ENCODE measurements at regions of chr5 and their contacts with region 1.

Region 1: GRCh38 chr5:137743031-137743640 is 7.2 kb upstream of the KLHL3 start:
- DNase-seq: no peak
- ATAC-seq: peak; percentile 84
- H3K4me3 ChIP-seq: no peak overlapping the region
- H3K27ac ChIP-seq: no peak overlapping the region
- H3K4me1 ChIP-seq: no peaks in the 10 kb centered on the region; the same call in 1 of the 2 replicates
- H3K27me3 ChIP-seq: no peaks in the 10 kb centered on the region
- CTCF ChIP-seq: peak; percentile 59 to 79 (median 69)
- EP300 ChIP-seq: no peak
- POLR2A ChIP-seq: no peak
- RAD21 ChIP-seq: peak; percentile 82

Region 2: GRCh38 chr5:137665678-137666460 is 77.3 kb before region 1 on chr5:
- CTCF ChIA-PET with region 1: interaction called, 619 read pairs
- POLR2A ChIA-PET with region 1: interaction called, 33 read pairs
- RAD21 ChIA-PET with region 1: interaction called, 168 read pairs
- SMC1A ChIA-PET with region 1: interaction called, 155 read pairs
- in situ Hi-C with region 1: no loop called
- intact Hi-C with region 1: no loop called
- DNase-seq: peak; percentile 58
- ATAC-seq: peak; percentile 100
- H3K4me3 ChIP-seq: no peak overlapping the region
- H3K27ac ChIP-seq: peak overlapping the region; percentile 29
- H3K4me1 ChIP-seq: peaks cover 14% of the 10 kb centered on the region
- H3K27me3 ChIP-seq: no peaks in the 10 kb centered on the region
- CTCF ChIP-seq: no peak
- EP300 ChIP-seq: no peak
- POLR2A ChIP-seq: no peak
- RAD21 ChIP-seq: no peak

Region 3: DNA sequence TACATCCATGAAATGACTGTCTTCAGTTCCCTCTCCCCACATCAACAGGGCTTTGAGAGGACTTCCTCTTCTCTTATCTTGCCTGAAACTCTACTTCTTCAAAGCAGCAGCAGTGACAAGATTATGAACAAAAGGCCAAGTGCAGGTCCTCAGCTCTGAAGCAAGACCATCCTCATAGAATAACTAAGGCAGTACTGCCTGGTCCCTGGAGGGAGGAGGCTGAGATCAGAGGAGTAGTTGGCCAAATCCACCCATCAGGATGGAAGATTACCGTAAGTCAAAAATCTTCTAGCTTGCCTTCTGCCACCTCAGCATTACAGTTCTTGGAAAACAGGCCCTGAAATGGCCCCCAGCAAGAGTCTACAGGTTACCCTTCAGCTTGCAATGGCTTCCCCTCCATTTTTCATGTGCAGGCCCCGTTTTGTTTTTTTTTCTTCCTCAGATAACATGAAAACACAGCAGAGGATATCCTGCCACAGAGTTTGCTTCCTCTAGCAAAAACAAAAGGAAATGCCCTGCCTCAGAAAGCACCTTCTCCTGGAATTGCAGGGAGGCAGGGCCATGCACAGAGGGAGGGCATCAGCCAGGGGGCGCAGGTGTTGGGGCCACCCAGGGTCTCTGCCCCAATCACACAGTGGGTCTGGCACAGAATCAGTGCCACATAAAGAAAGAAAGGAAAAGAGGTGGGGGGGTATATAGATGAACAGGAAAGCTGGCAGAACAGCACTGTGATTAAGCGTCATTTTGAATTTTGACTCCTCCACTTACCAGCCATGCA is 47.3 kb before region 1 on chr5:
- CTCF ChIA-PET with region 1: interaction called, 32 read pairs
- POLR2A ChIA-PET with region 1: interaction called, 3 read pairs
- RAD21 ChIA-PET with region 1: no interaction called
- SMC1A ChIA-PET with region 1: interaction called, 4 read pairs
- in situ Hi-C with region 1: no loop called
- intact Hi-C with region 1: no loop called
- DNase-seq: no peak
- ATAC-seq: no peak
- H3K4me3 ChIP-seq: no peak overlapping the region
- H3K27ac ChIP-seq: peak overlapping the region; percentile 21; the same call in 1 of the 2 replicates
- H3K4me1 ChIP-seq: peaks cover 7% of the 10 kb centered on the region
- H3K27me3 ChIP-seq: no peaks in the 10 kb centered on the region
- CTCF ChIP-seq: peak in 2 of 3 experiments; percentile 12 to 15; a peak in 1 of 6 replicates
- EP300 ChIP-seq: no peak
- POLR2A ChIP-seq: no peak
- RAD21 ChIP-seq: no peak

Region 4: DNA sequence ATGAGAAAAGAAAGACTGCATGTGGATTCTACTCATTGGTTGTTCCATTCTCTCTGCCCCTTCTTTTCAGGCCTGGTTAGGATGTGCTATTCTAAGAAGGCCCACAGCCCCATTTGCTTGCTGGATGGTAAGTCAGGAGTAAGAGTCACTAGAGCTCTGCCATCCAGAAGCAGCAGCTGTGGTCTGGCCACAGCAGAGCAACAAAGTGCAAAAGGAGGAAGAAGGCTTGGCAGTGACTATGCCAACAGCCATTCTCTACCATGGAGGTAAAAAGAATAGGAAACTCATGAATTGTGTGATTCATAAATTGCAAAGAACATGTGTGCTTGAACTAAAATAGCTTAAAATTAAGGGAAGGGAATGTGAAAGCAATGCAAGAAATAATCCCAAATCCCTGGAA is 28.2 kb before region 1 on chr5:
- CTCF ChIA-PET with region 1: interaction called, 30 read pairs
- POLR2A ChIA-PET with region 1: no interaction called
- RAD21 ChIA-PET with region 1: interaction called, 6 read pairs
- SMC1A ChIA-PET with region 1: interaction called, 4 read pairs
- in situ Hi-C with region 1: no loop called
- intact Hi-C with region 1: no loop called
- DNase-seq: no peak
- ATAC-seq: no peak
- H3K4me3 ChIP-seq: no peak overlapping the region
- H3K27ac ChIP-seq: no peak overlapping the region
- H3K4me1 ChIP-seq: no peaks in the 10 kb centered on the region
- H3K27me3 ChIP-seq: no peaks in the 10 kb centered on the region
- CTCF ChIP-seq: no peak
- EP300 ChIP-seq: no peak
- POLR2A ChIP-seq: no peak
- RAD21 ChIP-seq: no peak

Region 5: DNA sequence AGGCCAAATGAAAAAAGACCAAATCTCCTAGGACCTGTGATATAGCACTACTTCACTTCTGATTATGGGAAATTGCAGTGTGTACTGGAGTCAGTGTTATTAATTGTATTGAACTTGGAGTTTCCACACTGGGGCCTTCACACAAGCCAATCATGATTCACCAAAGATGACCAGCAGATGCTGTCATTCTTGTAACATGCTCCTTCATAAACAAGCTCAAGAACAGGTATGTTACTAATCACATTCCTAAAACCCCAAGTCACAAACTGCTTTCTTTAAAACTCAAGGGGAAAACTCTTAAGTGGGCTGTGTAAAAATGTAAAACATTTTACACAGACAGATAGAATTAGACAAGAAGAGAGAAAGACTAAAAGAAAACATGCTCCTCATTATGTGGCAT is 12.8 kb before region 1 on chr5:
- CTCF ChIA-PET with region 1: interaction called, 30 read pairs
- POLR2A ChIA-PET with region 1: interaction called, 7 read pairs
- RAD21 ChIA-PET with region 1: interaction called, 8 read pairs
- SMC1A ChIA-PET with region 1: interaction called, 25 read pairs
- in situ Hi-C with region 1: no loop called
- intact Hi-C with region 1: no loop called
- DNase-seq: no peak
- ATAC-seq: no peak
- H3K4me3 ChIP-seq: no peak overlapping the region; the same call in 1 of the 2 replicates
- H3K27ac ChIP-seq: no peak overlapping the region
- H3K4me1 ChIP-seq: no peaks in the 10 kb centered on the region; the same call in 1 of the 2 replicates
- H3K27me3 ChIP-seq: no peaks in the 10 kb centered on the region
- CTCF ChIP-seq: no peak
- EP300 ChIP-seq: no peak
- POLR2A ChIP-seq: no peak
- RAD21 ChIP-seq: no peak

Region 6: GRCh38 chr5:137808503-137809205 is 65.5 kb after region 1 on chr5:
- CTCF ChIA-PET with region 1: interaction called, 5 read pairs
- POLR2A ChIA-PET with region 1: interaction called, 10 read pairs
- RAD21 ChIA-PET with region 1: no interaction called
- SMC1A ChIA-PET with region 1: no interaction called
- in situ Hi-C with region 1: no loop called
- intact Hi-C with region 1: no loop called
- DNase-seq: no peak
- ATAC-seq: no peak
- H3K4me3 ChIP-seq: no peak overlapping the region
- H3K27ac ChIP-seq: no peak overlapping the region
- H3K4me1 ChIP-seq: no peaks in the 10 kb centered on the region
- H3K27me3 ChIP-seq: no peaks in the 10 kb centered on the region
- CTCF ChIP-seq: no peak
- EP300 ChIP-seq: no peak
- POLR2A ChIP-seq: no peak
- RAD21 ChIP-seq: no peak

Measured in GM12878 (cell line).